ENCODE measurements at regions of chr9 and their contacts with region 1.

Region 1: GRCh38 chr9:135887585-135888050 is 19.7 kb downstream of the CAMSAP1 start:
- DNase-seq: peak; percentile 14 to 86 (median 65)
- ATAC-seq: peak; percentile 98
- H3K4me3 ChIP-seq: peak overlapping the region; percentile 25 to 50
- H3K4me3 Mint-ChIP-seq: peak overlapping the region; percentile 77
- H3K27ac ChIP-seq: peak overlapping the region; percentile 73 to 75
- H3K27ac Mint-ChIP-seq: peak overlapping the region; percentile 96
- H3K4me1 ChIP-seq: peaks cover 39% of the 10 kb centered on the region
- H3K4me1 Mint-ChIP-seq: peaks cover 80% of the 10 kb centered on the region
- H3K27me3 ChIP-seq: no peaks in the 10 kb centered on the region
- H3K27me3 Mint-ChIP-seq: no peaks in the 10 kb centered on the region
- CTCF ChIP-seq: no peak

Region 2: DNA sequence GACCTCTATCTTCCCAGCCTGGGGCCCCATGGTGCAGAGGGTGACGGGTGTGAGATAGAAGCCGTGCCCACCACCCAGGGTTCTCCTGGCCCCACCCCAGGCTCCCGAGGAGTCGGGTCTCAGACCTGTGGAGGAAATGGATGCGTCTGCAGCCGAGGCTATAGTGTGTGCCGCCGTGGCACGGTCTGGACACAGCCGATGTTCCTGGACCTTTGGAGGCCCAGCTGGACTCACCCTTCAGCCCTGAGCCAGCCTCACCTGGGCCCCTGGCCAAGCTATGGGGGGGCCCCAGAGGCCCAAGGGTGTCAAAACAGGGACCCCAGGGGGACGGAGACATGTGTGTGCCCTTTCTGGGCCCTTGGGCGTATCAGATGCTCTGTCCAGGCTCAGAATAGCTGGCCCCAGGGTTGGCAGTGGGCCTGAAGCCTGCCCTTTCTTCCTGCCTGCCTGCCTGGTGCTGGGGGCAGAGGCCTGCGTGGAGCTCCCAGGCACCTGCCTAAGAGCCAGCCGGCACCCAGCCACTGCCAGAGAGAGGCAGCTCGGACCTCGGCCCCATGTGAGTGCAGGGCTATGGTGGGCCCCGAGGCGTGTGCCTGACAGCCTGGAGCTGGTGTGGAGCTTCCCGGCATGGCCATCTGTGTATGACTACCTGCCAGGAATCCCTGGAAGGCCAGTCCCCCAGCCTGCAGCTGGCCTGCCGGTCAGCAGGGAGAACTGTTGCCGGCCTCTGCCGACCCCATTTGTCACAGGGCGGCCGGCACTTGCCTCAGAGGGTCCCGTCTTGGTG is 143.9 kb before region 1 on chr9:
- CTCF ChIA-PET with region 1: no interaction called
- POLR2A ChIA-PET with region 1: no interaction called
- intact Hi-C with region 1: no loop called
- DNase-seq: no peak
- ATAC-seq: no peak
- H3K4me3 ChIP-seq: no peak overlapping the region
- H3K4me3 Mint-ChIP-seq: no peak overlapping the region
- H3K27ac ChIP-seq: no peak overlapping the region
- H3K27ac Mint-ChIP-seq: no peak overlapping the region
- H3K4me1 ChIP-seq: no peaks in the 10 kb centered on the region
- H3K4me1 Mint-ChIP-seq: no peaks in the 10 kb centered on the region
- H3K27me3 ChIP-seq: no peaks in the 10 kb centered on the region
- H3K27me3 Mint-ChIP-seq: peaks cover 9% of the 10 kb centered on the region
- CTCF ChIP-seq: no peak

Region 3: DNA sequence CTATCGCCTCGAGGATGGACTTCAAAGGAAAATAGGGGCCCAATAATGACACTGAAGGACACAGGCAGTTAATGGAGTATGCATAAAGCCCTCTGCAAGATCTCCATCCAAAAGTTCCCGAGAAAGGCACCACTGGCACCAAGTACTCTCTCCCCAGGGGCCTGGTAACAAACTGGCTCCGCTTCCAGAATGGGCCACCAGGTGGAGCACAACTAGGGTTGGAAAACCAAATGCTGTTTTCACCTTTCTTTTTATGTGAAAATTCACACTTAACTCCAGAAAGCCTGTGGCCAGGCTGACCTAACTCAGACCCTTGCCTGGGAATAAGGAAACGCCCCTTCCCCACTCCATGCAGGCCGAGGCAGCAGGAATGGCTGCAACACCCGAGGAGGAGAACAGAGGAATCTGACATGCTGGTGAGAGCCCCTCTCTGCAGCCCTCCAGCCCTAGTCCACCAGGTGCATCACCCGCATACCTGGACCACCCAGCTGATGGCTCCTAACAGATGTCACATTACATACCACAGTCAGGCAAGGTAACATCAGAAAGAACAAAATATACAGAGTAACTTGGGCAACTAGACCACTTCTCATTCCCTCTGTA is 23.1 kb before region 1 on chr9:
- CTCF ChIA-PET with region 1: interaction called, 3 read pairs
- POLR2A ChIA-PET with region 1: no interaction called
- intact Hi-C with region 1: loop called (anchors 1 to 2 kb)
- DNase-seq: peak; percentile 52 to 82 (median 65)
- ATAC-seq: peak; percentile 66
- H3K4me3 ChIP-seq: no peak overlapping the region
- H3K4me3 Mint-ChIP-seq: no peak overlapping the region
- H3K27ac ChIP-seq: no peak overlapping the region
- H3K27ac Mint-ChIP-seq: peak overlapping the region; percentile 32
- H3K4me1 ChIP-seq: no peaks in the 10 kb centered on the region
- H3K4me1 Mint-ChIP-seq: peaks cover 17% of the 10 kb centered on the region
- H3K27me3 ChIP-seq: no peaks in the 10 kb centered on the region
- H3K27me3 Mint-ChIP-seq: no peaks in the 10 kb centered on the region
- CTCF ChIP-seq: peak; percentile 87

Region 4: DNA sequence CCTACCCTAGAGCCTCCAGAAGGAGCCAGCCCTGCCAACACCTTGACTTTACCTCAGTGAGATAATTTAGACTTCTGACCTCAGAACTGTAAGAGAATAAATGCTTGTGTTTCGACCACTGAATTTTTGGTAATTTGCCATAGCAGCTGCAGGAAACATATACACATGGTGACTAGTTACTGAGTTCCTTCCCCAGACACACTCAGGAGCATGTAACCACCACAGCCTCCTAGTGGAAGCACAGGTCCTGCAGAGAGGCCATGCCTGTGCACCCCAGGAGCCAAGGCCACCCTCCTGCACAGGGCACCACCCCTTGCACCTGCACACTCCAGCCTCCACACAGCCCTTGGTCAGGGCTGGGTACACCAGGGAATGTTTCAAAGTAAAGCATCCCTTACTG is 27.3 kb after region 1 on chr9:
- CTCF ChIA-PET with region 1: no interaction called
- POLR2A ChIA-PET with region 1: no interaction called
- intact Hi-C with region 1: no loop called
- DNase-seq: no peak
- ATAC-seq: no peak
- H3K4me3 ChIP-seq: no peak overlapping the region
- H3K4me3 Mint-ChIP-seq: no peak overlapping the region
- H3K27ac ChIP-seq: no peak overlapping the region
- H3K27ac Mint-ChIP-seq: no peak overlapping the region
- H3K4me1 ChIP-seq: no peaks in the 10 kb centered on the region
- H3K4me1 Mint-ChIP-seq: peaks cover 13% of the 10 kb centered on the region
- H3K27me3 ChIP-seq: no peaks in the 10 kb centered on the region
- H3K27me3 Mint-ChIP-seq: no peaks in the 10 kb centered on the region
- CTCF ChIP-seq: no peak

Measured in CD8-positive, alpha-beta T cell (primary cell).